ENCODE measurements at regions of chr7 and their contacts with region 1.

Region 1: DNA sequence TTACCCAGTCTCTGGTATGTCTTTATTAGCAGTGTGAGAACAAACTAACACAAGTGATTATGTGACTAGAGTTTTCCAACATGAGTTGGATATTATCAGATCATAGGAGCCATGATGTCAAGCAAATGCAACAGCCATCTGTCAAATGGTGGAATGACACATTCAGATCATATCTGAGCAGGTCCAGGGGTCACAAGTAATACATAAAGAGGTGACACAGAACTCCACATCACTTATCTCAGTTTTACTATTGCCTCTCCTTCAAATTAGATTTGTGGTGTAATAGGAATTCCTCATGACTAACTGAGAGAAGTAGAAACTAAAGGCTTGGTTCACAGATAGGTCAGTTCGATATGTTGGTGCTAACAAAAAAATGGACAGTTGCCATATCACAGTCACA is 12.2 kb upstream of the SAMD9L start:
- DNase-seq: no peak
- H3K4me3 Mint-ChIP-seq: no peak overlapping the region
- H3K27ac Mint-ChIP-seq: peak overlapping the region; percentile 58
- H3K4me1 Mint-ChIP-seq: peaks cover 16% of the 10 kb centered on the region
- H3K27me3 Mint-ChIP-seq: no peaks in the 10 kb centered on the region

Region 2: DNA sequence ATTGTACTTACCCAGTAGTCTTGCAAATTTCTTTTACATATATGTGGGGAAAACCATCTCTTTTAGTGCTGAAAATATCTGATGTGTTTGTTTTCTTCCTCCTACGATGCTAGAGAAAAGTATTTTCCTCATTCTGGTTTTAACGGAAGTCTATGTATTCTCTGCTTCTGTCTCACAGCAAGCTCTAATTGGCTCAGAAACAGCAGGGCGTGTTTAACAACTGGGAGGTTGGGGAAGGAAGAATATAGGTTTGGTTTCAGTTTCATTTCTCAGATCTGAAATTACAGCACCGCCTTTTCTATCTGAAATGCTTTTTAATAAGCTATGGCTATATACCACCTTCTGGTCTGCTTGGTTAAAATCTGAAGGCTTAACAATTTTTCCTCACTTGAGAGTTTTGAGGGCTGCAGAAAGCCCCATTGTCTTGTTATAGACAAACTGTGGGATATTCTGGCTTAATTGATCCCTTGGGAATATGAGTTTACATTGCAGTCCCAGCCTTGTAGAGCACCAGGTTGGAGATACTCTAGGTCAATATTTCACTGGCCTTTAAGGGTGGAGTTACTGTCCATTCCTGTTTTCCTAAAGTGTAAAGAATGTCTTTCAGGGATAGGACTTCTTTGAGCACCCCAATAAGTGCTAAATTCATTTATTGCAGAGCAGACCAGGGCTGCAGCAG is 42.4 kb before region 1 on chr7 and contains the start of gene SAMD9:
- intact Hi-C with region 1: loop called (anchors 1 kb)
- DNase-seq: peak; percentile 58
- H3K4me3 Mint-ChIP-seq: peak within 1 kb of the TSS; percentile 85
- H3K27ac Mint-ChIP-seq: peak within 1 kb of the TSS; percentile 90
- H3K4me1 Mint-ChIP-seq: peaks cover 38% of the 10 kb centered on the region
- H3K27me3 Mint-ChIP-seq: no peaks in the 10 kb centered on the region
- total RNA-seq, gene SAMD9: 9.3 and 9.4 TPM in 2 replicates

Region 3: DNA sequence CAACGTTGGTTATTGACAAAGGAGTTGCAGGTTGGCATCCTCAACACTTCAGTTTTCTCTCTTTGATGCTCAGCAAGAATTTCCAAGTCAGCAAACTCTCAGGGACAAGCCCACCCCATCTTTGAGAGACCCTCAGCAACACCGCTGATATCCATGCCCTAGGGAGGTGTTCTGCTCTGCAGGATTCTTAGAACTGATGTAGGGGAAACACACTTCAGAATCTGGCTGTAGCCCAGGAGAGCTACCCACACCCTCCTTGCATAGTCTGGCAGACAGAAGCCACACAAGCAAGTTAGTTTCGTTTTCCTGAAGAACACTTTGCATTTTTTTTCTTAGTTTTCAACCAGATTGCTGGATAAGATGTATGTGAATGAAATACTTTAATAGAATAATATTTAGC is 13.0 kb before region 1 on chr7:
- intact Hi-C with region 1: loop called (anchors 1 kb)
- DNase-seq: peak; percentile 22
- H3K4me3 Mint-ChIP-seq: peak overlapping the region; percentile 87
- H3K27ac Mint-ChIP-seq: peak overlapping the region; percentile 89
- H3K4me1 Mint-ChIP-seq: peaks cover 36% of the 10 kb centered on the region
- H3K27me3 Mint-ChIP-seq: no peaks in the 10 kb centered on the region

Region 4: GRCh38 chr7:93185303-93186027 is 25.1 kb after region 1 on chr7:
- intact Hi-C with region 1: loop called (anchors 2 kb)
- DNase-seq: no peak
- H3K4me3 Mint-ChIP-seq: no peak overlapping the region
- H3K27ac Mint-ChIP-seq: no peak overlapping the region
- H3K4me1 Mint-ChIP-seq: no peaks in the 10 kb centered on the region
- H3K27me3 Mint-ChIP-seq: peaks cover 47% of the 10 kb centered on the region

Region 5: GRCh38 chr7:93242106-93242505 is 81.7 kb after region 1 on chr7:
- intact Hi-C with region 1: no loop called
- DNase-seq: no peak
- H3K4me3 Mint-ChIP-seq: no peak overlapping the region
- H3K27ac Mint-ChIP-seq: no peak overlapping the region
- H3K4me1 Mint-ChIP-seq: no peaks in the 10 kb centered on the region
- H3K27me3 Mint-ChIP-seq: no peaks in the 10 kb centered on the region

Region 6: DNA sequence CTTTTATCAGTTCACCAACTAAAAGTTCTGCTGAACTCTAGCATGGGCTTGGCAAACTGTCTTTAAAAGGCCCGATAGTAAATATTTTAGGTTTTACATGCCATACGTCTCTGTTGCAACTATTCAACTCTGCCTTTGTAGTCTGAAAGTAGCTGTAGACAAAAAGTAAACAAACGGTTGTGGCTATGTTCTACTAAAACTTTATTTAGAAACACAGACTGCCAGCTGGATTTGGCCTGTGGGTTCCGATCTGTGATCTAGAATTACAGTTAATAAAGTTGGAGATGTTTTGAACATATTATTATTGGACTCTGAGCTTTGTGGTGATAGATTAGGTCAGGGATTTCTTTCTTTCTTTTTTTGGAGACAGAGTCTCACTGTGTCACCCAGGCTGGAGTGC is 104.8 kb after region 1 on chr7:
- intact Hi-C with region 1: no loop called
- DNase-seq: no peak
- H3K4me3 Mint-ChIP-seq: no peak overlapping the region
- H3K27ac Mint-ChIP-seq: no peak overlapping the region
- H3K4me1 Mint-ChIP-seq: no peaks in the 10 kb centered on the region
- H3K27me3 Mint-ChIP-seq: no peaks in the 10 kb centered on the region

Measured in activated T-helper 2 cell treated with anti-CD3 and anti-CD28 coated beads, Interferon-gamma antibody, Interleukin-2, Interleukin-4, amounts not matched to agents 10 μg/mL and 5 μg/mL and 100 μg/mL, durations not matched to agents 14 hours and 24 hours and 36 hours (primary cell).